ENCODE measurements at regions of chr10 and their contacts with region 1.

Region 1: DNA sequence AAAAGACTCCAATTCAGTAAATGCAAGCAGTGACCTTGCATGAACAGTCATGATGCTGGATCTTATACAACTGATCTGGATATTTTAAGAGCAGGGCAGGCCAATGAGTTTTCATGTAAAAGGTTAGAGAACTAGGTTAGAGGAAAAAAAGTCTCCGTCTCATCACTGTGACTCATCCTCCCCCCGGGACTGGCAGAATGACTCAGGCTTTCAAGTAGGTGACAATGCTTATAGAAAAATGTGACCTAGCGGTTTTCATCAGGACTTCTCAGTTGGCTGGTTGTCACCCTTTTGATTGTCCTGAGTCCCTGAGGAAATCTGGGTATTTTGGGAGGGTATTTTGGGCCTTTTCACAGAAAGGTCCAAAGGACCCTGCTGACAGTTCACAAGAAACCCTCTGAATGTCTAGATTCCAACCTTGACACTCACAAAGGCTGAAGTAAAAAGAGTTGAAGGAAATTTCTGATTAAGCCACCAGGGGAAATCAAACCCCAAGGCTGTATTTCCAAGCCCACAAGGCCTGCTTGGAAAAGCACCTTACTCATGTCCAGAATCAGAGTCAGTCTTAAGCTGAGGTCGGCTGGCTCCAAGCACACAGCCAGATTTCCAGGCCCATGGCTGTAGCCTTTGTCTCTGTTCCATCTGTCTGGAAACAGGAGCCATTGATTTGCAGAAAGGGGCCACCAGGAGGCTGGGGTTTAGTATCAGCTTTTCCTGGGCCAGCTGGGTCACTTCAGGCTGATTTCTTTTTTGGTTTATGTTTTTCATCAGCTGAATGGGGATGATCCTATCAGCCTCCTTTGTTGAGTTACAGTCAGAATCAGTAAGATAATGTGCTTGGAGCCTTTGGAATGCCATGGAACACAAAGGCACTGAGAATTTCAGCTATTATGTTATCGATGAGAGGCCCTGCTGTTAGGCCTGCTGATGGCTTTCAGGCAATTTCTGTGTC is 226.4 kb upstream of the HABP2 start:
- DNase-seq: no peak
- H3K4me3 ChIP-seq: no peak overlapping the region
- H3K4me3 Mint-ChIP-seq: no peak overlapping the region
- H3K27ac Mint-ChIP-seq: no peak overlapping the region
- H3K4me1 ChIP-seq: peaks cover 7% of the 10 kb centered on the region; the same call in 1 of the 2 replicates
- H3K4me1 Mint-ChIP-seq: no peaks in the 10 kb centered on the region
- H3K27me3 ChIP-seq: no peaks in the 10 kb centered on the region
- H3K27me3 Mint-ChIP-seq: no peaks in the 10 kb centered on the region
- CTCF ChIP-seq: peak in 1 of 2 experiments; percentile 12

Region 2: DNA sequence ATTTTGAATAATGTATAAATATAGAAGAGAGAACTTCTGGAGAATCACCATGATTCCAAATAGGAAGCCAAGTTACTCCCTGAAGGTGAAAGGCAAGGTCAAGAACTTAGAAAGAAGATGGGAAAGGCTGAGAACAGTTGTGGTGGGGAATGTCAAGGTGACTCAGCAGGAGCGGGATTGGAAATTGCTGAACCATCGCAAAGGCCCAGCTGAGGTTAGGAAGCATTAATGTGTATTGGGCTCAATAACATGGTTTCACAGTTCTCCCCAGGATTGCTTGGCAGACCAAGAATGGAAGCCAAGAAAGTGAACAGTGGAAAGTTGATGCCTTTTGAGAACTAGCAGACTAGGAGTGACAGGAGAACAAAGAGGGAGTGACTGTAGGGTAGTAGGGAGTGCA is 746.2 kb before region 1 on chr10:
- CTCF ChIA-PET with region 1: no interaction called
- POLR2A ChIA-PET with region 1: no interaction called
- intact Hi-C with region 1: no loop called
- DNase-seq: no peak
- H3K4me3 ChIP-seq: no peak overlapping the region
- H3K4me3 Mint-ChIP-seq: no peak overlapping the region
- H3K27ac Mint-ChIP-seq: no peak overlapping the region
- H3K4me1 ChIP-seq: no peaks in the 10 kb centered on the region
- H3K4me1 Mint-ChIP-seq: no peaks in the 10 kb centered on the region
- H3K27me3 ChIP-seq: no peaks in the 10 kb centered on the region
- H3K27me3 Mint-ChIP-seq: no peaks in the 10 kb centered on the region
- CTCF ChIP-seq: no peak

Region 3: DNA sequence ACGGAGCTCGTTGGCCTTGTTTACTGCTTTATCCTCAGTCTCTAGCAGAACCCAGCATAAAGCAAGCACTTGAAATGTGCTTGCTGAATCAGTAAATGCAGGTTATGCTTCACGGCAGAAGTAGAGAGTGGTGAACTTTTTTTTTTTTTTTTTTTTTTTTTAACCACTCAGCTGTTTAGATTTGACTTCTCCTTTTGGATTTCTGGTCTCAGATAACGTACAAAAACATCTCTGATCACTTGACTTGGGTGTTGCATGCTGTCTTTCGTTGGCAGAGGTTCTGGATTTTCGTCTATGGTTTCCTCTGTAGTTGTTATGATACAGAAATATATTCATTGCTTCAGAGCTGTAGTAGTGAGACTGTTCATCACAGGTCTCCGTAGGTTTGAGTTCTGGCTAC is 16.1 kb before region 1 on chr10:
- CTCF ChIA-PET with region 1: no interaction called
- POLR2A ChIA-PET with region 1: interaction called, 18 read pairs
- intact Hi-C with region 1: no loop called
- DNase-seq: no peak
- H3K4me3 ChIP-seq: no peak overlapping the region
- H3K4me3 Mint-ChIP-seq: no peak overlapping the region
- H3K27ac Mint-ChIP-seq: no peak overlapping the region
- H3K4me1 ChIP-seq: 0 out of 2 replicates have a peak, but pooled peaks cover 5% of the 10 kb centered on the region
- H3K4me1 Mint-ChIP-seq: peaks cover 7% of the 10 kb centered on the region
- H3K27me3 ChIP-seq: no peaks in the 10 kb centered on the region
- H3K27me3 Mint-ChIP-seq: peaks cover 3% of the 10 kb centered on the region
- CTCF ChIP-seq: no peak

Region 4: DNA sequence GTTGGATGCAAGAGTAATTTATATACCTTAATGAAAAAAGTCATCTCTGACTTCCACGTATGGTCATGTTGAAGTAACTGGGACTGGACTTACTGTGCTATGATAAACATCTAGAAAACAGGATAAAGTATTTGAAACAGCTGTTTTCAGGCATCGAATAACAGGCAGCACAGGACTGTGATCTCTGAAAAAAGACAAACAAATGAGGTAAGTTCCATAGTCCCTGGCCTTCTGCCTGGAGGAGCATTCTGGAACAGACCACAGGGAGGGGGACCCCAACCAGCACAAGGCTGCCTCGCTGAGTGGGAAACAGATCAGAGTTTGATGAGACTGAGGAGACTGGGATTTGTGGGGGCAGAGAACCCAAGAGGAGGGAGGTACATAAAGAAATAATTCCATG is 137.3 kb after region 1 on chr10:
- CTCF ChIA-PET with region 1: no interaction called
- POLR2A ChIA-PET with region 1: no interaction called
- intact Hi-C with region 1: no loop called
- DNase-seq: no peak
- H3K4me3 ChIP-seq: no peak overlapping the region
- H3K4me3 Mint-ChIP-seq: no peak overlapping the region
- H3K27ac Mint-ChIP-seq: no peak overlapping the region
- H3K4me1 ChIP-seq: no peaks in the 10 kb centered on the region
- H3K4me1 Mint-ChIP-seq: peaks cover 14% of the 10 kb centered on the region
- H3K27me3 ChIP-seq: no peaks in the 10 kb centered on the region
- H3K27me3 Mint-ChIP-seq: no peaks in the 10 kb centered on the region
- CTCF ChIP-seq: no peak

Region 5: GRCh38 chr10:114195079-114195478 is 868.6 kb after region 1 on chr10:
- CTCF ChIA-PET with region 1: no interaction called
- POLR2A ChIA-PET with region 1: no interaction called
- intact Hi-C with region 1: no loop called
- DNase-seq: no peak
- H3K4me3 ChIP-seq: no peak overlapping the region
- H3K4me3 Mint-ChIP-seq: no peak overlapping the region
- H3K27ac Mint-ChIP-seq: no peak overlapping the region
- H3K4me1 ChIP-seq: peaks cover 6% of the 10 kb centered on the region; the same call in 1 of the 2 replicates
- H3K4me1 Mint-ChIP-seq: peaks cover 11% of the 10 kb centered on the region
- H3K27me3 ChIP-seq: no peaks in the 10 kb centered on the region
- H3K27me3 Mint-ChIP-seq: no peaks in the 10 kb centered on the region
- CTCF ChIP-seq: no peak